Activated naive CD8-positive, alpha-beta T cell treated with anti-CD3 and anti-CD28 coated beads, Interleukin-2, amount 10 ng/mL, durations not matched to agents 7 days and 5 days (primary cell): ENCODE measurements at regions of chr7 and their contacts with region 1.

Region 1: DNA sequence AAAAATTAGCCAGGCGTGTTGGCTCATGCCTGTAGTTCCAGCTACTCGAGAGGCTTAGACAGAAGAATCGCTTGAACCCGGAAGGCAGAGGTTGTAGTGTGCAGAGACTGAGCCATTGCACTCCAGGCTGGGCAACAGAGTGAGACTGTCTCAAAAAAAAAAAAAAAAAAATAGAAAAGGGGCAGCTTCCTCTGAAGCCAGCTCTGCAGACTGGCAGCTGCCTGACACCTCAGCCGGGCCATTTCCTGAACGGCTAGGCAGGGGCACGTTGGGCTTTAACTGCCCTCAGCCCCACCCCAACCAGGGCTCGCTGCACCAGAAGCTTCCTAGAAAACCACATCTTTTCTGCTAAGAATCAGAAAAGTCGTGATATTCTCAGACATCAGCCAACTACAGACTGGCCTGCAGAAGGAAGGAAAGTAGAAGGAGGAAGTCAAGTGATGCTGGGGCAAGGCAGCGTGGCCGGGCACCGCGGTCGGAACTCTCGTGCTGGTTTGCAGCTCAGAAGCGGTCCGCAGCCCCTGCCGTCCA is 38.0 kb downstream of the PRKAG2 start:
- DNase-seq: peak; percentile 70
- ATAC-seq: peak; percentile 93
- H3K4me3 Mint-ChIP-seq: peak overlapping the region; percentile 76
- H3K27ac Mint-ChIP-seq: peak overlapping the region; percentile 90
- H3K4me1 Mint-ChIP-seq: peaks cover 29% of the 10 kb centered on the region
- H3K27me3 Mint-ChIP-seq: no peaks in the 10 kb centered on the region

Region 2: DNA sequence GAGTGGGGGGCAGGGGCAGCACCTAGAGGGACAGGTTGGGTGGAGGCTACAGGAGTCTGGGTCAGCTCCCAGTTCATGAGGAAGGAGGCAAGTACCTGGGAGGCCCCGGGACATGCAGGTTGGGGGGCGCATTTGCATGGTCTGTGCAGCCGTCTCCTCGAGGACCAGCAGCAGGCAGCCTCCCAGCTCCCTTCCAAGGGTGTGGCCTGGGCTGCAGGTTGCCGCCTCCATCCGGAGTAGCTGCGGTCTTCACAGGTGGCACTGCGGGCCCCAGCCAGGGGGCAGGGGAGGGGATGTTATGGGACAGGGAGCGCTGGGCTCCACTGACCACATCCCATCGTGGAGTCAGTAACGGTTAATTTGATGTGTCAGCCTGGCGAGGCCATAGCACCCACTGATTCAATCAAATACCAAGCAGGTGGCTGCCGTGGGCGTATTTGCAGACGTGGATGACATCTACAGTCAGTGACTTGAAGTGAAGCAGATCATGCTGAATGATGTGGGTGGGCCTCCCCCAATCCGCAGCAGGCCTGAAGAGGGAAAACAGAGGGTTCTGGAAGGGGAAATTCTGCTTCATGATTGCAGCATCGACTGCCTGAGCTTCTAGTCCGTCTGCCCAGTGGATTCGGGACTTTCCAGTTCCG is 43.6 kb before region 1 on chr7:
- POLR2A ChIA-PET with region 1: no interaction called
- DNase-seq: no peak
- ATAC-seq: no peak
- H3K4me3 Mint-ChIP-seq: no peak overlapping the region
- H3K27ac Mint-ChIP-seq: peak overlapping the region; percentile 58
- H3K4me1 Mint-ChIP-seq: no peaks in the 10 kb centered on the region
- H3K27me3 Mint-ChIP-seq: no peaks in the 10 kb centered on the region

Region 3: DNA sequence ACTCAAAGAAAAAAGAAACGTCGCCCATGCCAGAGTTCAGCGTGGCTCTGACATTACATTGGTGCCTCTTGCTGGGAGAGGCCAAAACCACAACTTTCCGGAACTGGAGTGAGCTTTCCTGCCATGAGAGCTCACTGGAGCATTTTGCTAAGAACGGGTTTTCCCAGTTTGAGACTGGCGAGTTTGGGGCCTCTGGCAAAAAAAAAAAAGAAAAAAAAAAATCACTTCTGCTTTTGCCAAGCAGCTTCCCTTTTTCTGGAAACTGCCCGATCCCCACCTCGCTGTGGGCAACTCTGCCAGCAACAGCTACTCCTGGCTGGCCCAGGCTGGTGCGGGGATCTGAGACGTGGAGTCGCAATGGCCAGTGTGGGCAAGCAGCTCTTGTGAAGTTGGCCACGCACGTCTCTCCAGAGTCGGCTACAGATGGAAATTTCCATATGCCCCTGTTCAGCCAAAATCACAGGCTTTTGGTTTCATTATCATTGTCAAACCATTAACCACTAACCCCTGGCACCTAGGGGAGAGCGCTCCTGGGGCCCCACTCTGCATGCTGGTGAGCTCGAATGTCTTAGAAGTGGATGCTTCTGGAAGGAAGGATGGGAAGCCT is 12.3 kb after region 1 on chr7:
- POLR2A ChIA-PET with region 1: interaction called, 15 read pairs
- DNase-seq: no peak
- ATAC-seq: peak; percentile 56
- H3K4me3 Mint-ChIP-seq: peak overlapping the region; percentile 45
- H3K27ac Mint-ChIP-seq: peak overlapping the region; percentile 14
- H3K4me1 Mint-ChIP-seq: peaks cover 13% of the 10 kb centered on the region
- H3K27me3 Mint-ChIP-seq: no peaks in the 10 kb centered on the region

Region 4: DNA sequence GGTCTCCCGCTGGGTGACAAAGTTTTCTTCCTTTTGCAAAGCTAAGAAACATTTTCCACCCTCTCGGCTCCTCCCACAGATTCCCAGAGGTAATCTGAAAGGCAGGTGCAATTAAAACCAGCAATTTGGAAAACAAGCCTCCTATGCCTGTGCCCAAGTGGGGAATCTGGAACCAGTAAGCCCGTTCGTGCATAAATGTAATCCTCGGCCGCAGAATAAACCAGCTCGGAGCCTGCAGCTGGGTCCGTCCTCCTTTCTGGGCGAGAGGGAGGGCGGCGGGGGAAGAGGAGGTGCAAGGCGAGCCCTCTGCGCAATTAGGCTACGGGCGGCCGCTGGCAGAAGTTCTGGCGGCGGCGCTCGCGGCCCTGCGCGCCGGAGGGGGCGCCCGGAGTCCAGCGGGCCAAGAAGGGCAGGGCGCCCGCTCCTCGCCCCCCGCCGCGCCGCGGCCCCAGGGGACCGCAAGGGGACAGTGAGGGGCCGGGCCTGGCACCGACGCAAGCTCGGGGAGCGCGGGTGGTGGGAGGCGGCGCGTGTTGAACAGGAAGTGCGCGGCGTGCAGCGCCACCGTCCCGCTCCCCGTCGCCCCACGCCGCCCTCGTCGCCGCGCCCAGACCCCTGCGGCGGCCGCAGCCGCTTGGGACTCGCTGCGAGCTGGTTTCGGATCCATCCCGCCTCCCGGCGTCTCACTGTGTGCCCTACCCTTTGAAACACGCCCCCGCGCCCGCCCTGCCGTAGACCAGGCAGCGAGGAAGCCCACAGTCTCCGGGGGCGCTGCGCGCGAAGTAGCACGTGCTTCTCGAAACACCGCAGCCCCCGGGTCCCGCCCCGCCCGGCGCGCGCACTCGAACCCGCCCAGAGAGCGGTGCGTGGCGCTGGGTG is 38.2 kb after region 1 on chr7 and contains the start of gene PRKAG2:
- POLR2A ChIA-PET with region 1: interaction called, 14 read pairs
- DNase-seq: peak; percentile 77
- ATAC-seq: peak; percentile 65
- H3K4me3 Mint-ChIP-seq: peak within 1 kb of the TSS; percentile 93
- H3K27ac Mint-ChIP-seq: peak within 1 kb of the TSS; percentile 85
- H3K4me1 Mint-ChIP-seq: peaks cover 5% of the 10 kb centered on the region
- H3K27me3 Mint-ChIP-seq: peaks cover 1% of the 10 kb centered on the region
- total RNA-seq, gene PRKAG2: 29.0 to 38.9 TPM